ENCODE measurements at regions of chr15 and their contacts with region 1.

Region 1: DNA sequence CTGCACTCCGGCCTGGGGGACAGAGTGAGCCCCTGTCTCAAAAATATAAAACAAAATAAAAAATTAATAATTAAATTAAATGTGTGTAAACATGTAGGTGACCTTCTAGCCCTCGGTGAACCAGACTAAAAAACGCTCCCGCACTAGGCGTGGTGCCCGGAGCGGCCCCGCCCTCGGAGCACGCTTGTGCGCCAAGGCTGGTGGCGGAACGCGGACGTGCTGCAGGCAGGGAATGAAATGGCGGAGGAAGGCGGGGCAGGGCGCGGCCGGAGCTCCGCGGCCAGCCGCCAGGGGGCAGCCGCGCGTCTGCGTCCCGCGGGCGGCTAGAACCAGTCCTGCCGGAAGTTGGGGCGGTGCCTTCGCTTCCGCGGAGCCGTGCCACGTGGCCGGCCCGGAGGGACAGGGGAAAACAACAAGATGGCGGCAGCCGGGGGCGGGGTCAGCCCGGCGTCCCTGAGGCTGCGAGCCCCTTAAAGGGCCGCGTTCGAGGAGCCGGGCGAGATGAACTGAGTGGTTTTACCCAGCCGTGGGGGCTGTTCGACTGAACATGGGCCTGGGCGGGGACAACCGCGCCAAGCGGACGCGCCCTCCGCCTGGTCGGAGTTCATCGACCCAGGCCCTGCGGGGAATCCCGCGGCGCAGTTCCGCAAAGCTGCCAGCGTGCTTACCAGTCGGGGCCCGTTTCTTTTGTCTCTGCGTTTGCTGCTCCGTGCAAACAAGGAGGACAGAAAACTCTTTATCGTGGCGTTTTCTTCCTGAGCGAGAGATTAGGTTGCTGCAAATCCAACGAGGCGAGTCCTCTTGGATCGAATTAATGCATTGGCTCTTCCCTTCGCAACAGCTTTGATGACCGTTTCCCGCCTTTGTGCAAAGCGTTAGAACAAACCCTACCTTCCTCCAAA is 90.9 kb upstream of the CHD2 start:
- DNase-seq: peak; percentile 94
- H3K4me3 ChIP-seq: peak overlapping the region; percentile 61
- H3K27ac ChIP-seq: peak overlapping the region; percentile 99
- H3K27me3 ChIP-seq: no peaks in the 10 kb centered on the region
- CTCF ChIP-seq: peak; percentile 73

Region 2: GRCh38 chr15:92820236-92821021 is 11.2 kb after region 1 on chr15:
- CTCF ChIA-PET with region 1: interaction called, 10 read pairs
- POLR2A ChIA-PET with region 1: interaction called, 5 read pairs
- DNase-seq: peak; percentile 58
- H3K4me3 ChIP-seq: peak overlapping the region; percentile 49
- H3K27ac ChIP-seq: peak overlapping the region; percentile 66
- H3K27me3 ChIP-seq: no peaks in the 10 kb centered on the region
- CTCF ChIP-seq: no peak

Region 3: DNA sequence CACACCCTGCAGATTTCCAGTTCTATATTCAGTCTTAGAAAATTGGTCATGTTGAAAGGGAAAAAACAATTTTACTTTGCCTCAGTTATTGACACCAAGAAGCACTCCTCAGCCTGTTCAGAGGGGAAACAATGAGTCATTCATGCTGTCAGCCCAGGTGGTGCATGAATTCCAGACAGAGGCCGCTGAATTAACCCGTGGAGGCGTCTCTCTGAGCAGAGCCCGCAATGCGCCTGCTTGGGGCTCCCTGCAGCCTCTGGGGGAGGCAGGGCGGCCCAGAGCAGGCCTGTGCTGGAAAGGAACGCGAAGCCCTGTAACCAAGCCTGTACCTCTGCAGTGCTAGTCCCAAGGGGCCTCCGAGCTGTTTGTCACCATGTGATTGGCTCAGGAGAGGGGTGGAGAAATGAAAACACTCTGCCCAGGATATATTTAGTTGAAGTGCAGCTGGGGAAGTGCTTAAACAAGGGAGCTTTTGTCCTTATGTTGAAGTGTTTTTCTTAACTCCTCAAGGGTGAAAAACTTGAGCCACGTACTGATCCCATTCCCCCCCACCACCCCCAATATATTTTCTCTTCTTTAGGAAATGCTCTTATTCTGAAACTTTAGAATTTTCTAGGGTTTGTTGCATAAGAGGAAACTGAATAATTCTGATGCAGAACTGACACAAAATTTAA is 22.6 kb after region 1 on chr15:
- CTCF ChIA-PET with region 1: interaction called, 7 read pairs
- POLR2A ChIA-PET with region 1: interaction called, 14 read pairs
- DNase-seq: peak; percentile 89
- H3K4me3 ChIP-seq: peak overlapping the region; percentile 8; the same call in 1 of the 2 replicates
- H3K27ac ChIP-seq: peak overlapping the region; percentile 83
- H3K27me3 ChIP-seq: no peaks in the 10 kb centered on the region
- CTCF ChIP-seq: 0 out of 2 replicates have a peak, but pooled peaks have one; percentile 10

Region 4: GRCh38 chr15:92930776-92931175 is 121.5 kb after region 1 on chr15:
- CTCF ChIA-PET with region 1: interaction called, 4 read pairs
- POLR2A ChIA-PET with region 1: interaction called, 14 read pairs
- DNase-seq: peak; percentile 71
- H3K4me3 ChIP-seq: no peak overlapping the region
- H3K27ac ChIP-seq: peak overlapping the region; percentile 79
- H3K27me3 ChIP-seq: no peaks in the 10 kb centered on the region
- CTCF ChIP-seq: no peak